Left colon (tissue), 2 donors: ENCODE measurements at regions of chrX and their contacts with region 1.

Region 1: GRCh38 chrX:50905334-50905733 is 5.2 kb upstream of the BMP15 start:
- DNase-seq: peak in 1 of 2 donors; percentile 16
- ATAC-seq: no peak

Region 2: GRCh38 chrX:50747471-50747900 is 157.8 kb before region 1 on chrX:
- intact Hi-C with region 1: loop called in 1 of 2 experiments (anchors 5 kb)
- DNase-seq: no peak
- ATAC-seq: peak; percentile 48

Region 3: GRCh38 chrX:51053741-51054140 is 148.4 kb after region 1 on chrX:
- intact Hi-C with region 1: no loop called
- DNase-seq: no peak
- ATAC-seq: no peak

Region 4: GRCh38 chrX:51272638-51273037 is 367.3 kb after region 1 on chrX:
- intact Hi-C with region 1: no loop called
- DNase-seq: no peak
- ATAC-seq: no peak